CD4-positive, alpha-beta T cell (primary cell): ENCODE measurements at regions of chr2 and their contacts with region 1.

Region 1: DNA sequence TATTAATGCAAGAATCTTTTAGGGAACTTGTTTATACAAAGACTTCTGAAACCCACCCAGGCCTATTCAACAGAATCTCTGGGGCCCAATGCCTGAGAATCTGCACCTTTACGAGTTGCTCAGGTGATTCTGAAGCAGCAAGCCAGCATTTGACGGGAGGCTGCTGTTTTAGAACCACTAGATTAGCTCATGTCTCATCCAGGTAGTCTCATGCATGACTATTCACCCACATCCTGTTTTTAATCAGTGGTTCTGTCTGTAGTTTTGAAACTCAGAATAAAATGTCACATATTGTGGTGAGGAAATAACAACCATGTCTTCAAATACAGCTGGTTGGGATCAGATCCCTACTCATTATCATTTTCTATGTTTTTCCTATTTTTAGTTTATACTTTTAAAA is 39.5 kb downstream of the CYTIP start:
- DNase-seq: peak; percentile 53 to 93 (median 66)
- ATAC-seq: peak; percentile 91
- H3K4me3 ChIP-seq: no peak overlapping the region
- H3K4me3 Mint-ChIP-seq: peak overlapping the region; percentile 74
- H3K27ac ChIP-seq: peak overlapping the region; percentile 58 to 94
- H3K27ac Mint-ChIP-seq: peak overlapping the region; percentile 99
- H3K4me1 ChIP-seq: peaks cover 33% of the 10 kb centered on the region
- H3K4me1 Mint-ChIP-seq: peaks cover 82% of the 10 kb centered on the region
- H3K27me3 ChIP-seq: no peaks in the 10 kb centered on the region
- H3K27me3 Mint-ChIP-seq: no peaks in the 10 kb centered on the region
- CTCF ChIP-seq: no peak

Region 2: DNA sequence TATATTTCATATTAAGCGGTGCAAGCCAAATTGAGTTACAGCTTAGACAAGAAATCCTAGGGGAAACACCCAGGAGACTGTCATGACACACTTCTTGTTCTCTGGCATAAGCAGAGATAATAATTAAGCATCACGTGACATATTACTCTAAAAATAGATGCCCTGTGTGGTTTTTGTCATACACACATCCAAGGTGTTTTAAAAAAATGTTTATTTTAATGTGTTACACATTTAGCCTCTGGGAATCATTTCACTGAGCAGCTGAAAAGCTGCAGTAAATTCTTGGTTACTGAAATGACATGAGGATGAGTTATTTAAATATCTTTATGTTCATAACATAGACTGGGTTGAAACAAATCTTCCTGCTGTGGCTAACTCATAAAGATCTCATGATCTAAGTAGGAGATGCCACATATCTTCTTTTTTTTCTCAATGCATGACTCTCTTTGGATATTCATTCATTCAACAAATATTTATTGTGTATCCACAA is 40.7 kb before region 1 on chr2:
- CTCF ChIA-PET with region 1: no interaction called
- POLR2A ChIA-PET with region 1: interaction called, 4 read pairs
- intact Hi-C with region 1: loop called in 1 of 2 experiments (anchors 5 kb)
- DNase-seq: peak in 1 of 14 experiments; percentile 34
- ATAC-seq: no peak
- H3K4me3 ChIP-seq: no peak overlapping the region
- H3K4me3 Mint-ChIP-seq: no peak overlapping the region
- H3K27ac ChIP-seq: no peak overlapping the region
- H3K27ac Mint-ChIP-seq: no peak overlapping the region
- H3K4me1 ChIP-seq: peaks cover 3% of the 10 kb centered on the region
- H3K4me1 Mint-ChIP-seq: peaks cover 48% of the 10 kb centered on the region
- H3K27me3 ChIP-seq: no peaks in the 10 kb centered on the region
- H3K27me3 Mint-ChIP-seq: no peaks in the 10 kb centered on the region
- CTCF ChIP-seq: no peak

Region 3: DNA sequence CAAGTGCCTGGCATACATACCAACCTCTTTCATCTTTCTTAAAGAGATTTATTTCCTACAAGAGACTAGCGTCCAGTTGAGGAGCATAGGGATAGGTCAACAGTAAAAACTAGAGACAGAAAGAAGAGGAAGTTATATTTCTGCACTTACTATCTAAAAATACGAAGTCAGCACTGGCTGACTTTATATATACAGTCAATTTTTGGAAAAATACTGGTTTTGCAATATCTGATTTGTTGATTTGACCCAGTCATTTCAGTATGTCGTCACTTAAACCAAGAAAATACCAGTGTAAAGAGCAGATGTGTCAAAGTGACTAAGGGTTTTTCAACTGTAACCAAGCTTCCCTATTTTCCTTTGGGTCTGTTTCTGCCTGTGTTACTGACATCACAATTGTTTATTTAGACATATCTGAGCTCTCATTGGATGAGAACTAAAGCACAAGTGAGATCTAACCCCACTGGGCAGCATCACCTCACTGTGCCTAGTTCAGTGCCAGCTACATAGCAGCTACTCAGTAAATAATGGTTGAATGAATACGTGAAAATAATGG is 16.5 kb after region 1 on chr2:
- CTCF ChIA-PET with region 1: interaction called, 3 read pairs
- POLR2A ChIA-PET with region 1: interaction called, 139 read pairs
- intact Hi-C with region 1: loop called in 1 of 2 experiments (anchors 2 kb)
- DNase-seq: peak in 3 of 14 experiments; percentile 63 to 73 (median 70)
- ATAC-seq: peak; percentile 8
- H3K4me3 ChIP-seq: no peak overlapping the region
- H3K4me3 Mint-ChIP-seq: peak overlapping the region; percentile 72
- H3K27ac ChIP-seq: peak overlapping the region; percentile 69
- H3K27ac Mint-ChIP-seq: peak overlapping the region; percentile 96
- H3K4me1 ChIP-seq: peaks cover 49% of the 10 kb centered on the region
- H3K4me1 Mint-ChIP-seq: peaks cover 80% of the 10 kb centered on the region
- H3K27me3 ChIP-seq: no peaks in the 10 kb centered on the region
- H3K27me3 Mint-ChIP-seq: no peaks in the 10 kb centered on the region
- CTCF ChIP-seq: no peak

Region 4: DNA sequence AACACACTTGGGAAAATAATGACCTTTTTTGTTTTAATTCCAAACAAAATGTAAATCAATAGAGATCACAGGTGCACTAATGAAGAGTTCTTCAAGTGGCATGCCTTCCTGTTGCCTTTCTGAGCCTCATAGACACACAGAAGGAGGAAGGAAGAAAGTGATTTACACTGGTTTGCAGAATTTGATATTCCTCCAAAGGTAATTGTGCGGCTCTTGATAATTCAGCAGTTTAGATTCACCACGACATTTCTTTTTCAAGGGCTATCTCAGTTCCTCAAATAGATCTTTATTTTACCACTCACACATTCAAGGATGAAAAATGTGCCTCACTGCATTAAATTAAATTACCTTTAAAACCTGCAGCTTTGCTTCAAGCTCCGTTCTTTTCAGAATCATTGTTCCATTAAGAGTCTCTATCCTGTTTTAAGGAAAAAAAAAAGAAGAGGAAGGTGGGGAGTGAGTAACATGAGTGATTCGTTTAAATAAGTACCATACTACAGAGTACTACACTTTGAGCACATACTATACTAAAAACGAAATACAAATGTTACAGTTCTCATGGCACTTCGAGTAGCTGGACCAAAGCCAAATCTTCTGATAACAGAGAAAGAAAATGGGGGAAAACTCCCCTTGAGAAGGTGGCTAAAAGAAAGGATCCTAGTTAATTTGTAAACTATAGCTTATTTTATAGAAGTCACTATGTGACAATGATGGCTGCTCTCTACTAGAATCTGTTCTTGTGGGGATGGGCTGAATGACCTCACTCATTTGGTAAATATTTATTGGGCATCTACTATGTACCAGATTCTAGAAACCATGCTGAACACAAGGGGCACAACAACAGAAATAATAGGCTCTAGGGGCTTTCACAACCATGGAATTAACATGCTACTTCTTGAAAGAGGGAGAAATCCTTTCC is 22.9 kb after region 1 on chr2:
- CTCF ChIA-PET with region 1: interaction called, 3 read pairs
- POLR2A ChIA-PET with region 1: interaction called, 258 read pairs
- intact Hi-C with region 1: no loop called
- DNase-seq: no peak
- ATAC-seq: peak; percentile 3
- H3K4me3 ChIP-seq: no peak overlapping the region
- H3K4me3 Mint-ChIP-seq: peak overlapping the region; percentile 63
- H3K27ac ChIP-seq: peak overlapping the region; percentile 6
- H3K27ac Mint-ChIP-seq: peak overlapping the region; percentile 97
- H3K4me1 ChIP-seq: peaks cover 30% of the 10 kb centered on the region
- H3K4me1 Mint-ChIP-seq: peaks cover 85% of the 10 kb centered on the region
- H3K27me3 ChIP-seq: no peaks in the 10 kb centered on the region
- H3K27me3 Mint-ChIP-seq: no peaks in the 10 kb centered on the region
- CTCF ChIP-seq: no peak

Region 5: DNA sequence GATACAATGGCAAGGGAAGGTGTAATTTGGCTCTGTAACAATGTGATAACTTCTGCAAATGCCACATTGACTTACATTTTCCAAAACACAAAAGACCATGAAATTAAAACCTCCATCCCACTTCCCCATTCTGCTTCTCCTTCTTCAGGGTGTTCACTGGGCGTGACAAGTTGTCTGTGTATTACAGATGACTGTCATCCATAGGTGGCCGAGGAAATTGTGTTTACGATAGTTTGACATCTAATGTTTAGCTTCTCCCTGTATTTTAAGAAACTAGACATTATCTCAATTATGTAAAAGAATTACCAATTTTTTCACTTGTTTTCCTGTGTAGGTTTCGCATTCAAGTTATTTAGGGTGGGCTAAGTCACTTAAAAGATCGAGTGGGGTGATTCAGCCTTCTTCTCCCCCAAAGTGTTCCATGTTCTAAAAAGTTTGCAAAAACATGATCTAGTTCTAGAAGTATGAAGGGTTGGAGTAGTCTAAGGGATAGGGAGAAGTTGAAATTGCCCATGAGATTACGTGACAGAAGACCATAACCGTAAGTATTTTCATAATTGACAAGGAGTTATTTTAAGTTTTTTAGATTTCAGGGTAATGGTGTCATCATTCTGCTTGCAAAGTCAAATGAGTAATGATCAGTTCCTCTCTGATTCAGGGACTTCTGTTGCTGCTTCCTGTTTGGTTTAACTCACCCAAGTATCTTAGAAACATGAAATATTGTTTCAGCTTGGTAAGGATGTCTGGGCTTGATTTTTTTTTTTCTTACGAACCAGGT is 64.8 kb after region 1 on chr2:
- CTCF ChIA-PET with region 1: no interaction called
- POLR2A ChIA-PET with region 1: interaction called, 13 read pairs
- intact Hi-C with region 1: no loop called
- DNase-seq: peak in 3 of 14 experiments; percentile 81 to 86 (median 84)
- ATAC-seq: peak; percentile 89
- H3K4me3 ChIP-seq: peak overlapping the region; percentile 11
- H3K4me3 Mint-ChIP-seq: peak overlapping the region; percentile 74
- H3K27ac ChIP-seq: peak overlapping the region; percentile 80 to 88
- H3K27ac Mint-ChIP-seq: peak overlapping the region; percentile 98
- H3K4me1 ChIP-seq: peaks cover 31% of the 10 kb centered on the region
- H3K4me1 Mint-ChIP-seq: peaks cover 64% of the 10 kb centered on the region
- H3K27me3 ChIP-seq: no peaks in the 10 kb centered on the region
- H3K27me3 Mint-ChIP-seq: no peaks in the 10 kb centered on the region
- CTCF ChIP-seq: no peak